ENCODE measurements at regions of chr7 and their contacts with region 1.

Region 1: GRCh38 chr7:19982841-19983835 is 209.7 kb upstream of the TMEM196 start:
- DNase-seq: no peak
- CTCF ChIP-seq: peak; percentile 61

Region 2: GRCh38 chr7:19754521-19755116 is 228.5 kb before region 1 on chr7:
- in situ Hi-C with region 1: loop called (anchors 25 kb)
- DNase-seq: peak; percentile 17
- CTCF ChIP-seq: peak; percentile 57

Region 3: DNA sequence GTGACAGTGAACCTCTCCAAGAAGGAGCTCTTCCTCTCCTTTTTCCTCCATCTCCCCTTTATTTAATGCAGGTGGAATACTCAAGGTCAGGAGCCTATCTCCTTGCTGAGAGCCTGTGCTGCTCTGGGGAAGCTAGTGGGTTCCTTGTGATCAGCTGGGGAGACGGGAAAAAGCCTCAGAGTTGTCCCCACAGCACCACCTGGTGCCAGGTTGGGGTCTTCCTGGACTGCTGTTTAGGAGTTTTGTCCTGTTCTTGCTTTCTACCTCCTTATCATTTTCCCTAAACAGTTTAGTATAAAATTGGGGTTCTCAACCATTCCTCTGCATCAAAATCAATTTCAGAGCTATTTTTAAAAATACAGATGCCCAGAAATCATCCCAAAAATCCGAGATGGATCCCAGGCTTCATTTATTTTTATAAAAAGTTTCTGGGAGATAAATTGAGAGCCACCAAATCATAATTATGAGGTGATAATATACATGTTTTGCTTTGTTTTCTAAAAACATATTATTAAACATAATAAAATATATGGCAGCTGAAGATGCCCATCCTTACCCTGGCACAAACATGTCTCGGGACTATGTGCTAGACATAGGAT is 189.7 kb after region 1 on chr7:
- in situ Hi-C with region 1: loop called (anchors 25 kb)
- DNase-seq: peak; percentile 17
- CTCF ChIP-seq: peak; percentile 63

Region 4: GRCh38 chr7:20249920-20250319 is 266.8 kb after region 1 on chr7:
- in situ Hi-C with region 1: no loop called
- DNase-seq: no peak
- CTCF ChIP-seq: no peak

Region 5: DNA sequence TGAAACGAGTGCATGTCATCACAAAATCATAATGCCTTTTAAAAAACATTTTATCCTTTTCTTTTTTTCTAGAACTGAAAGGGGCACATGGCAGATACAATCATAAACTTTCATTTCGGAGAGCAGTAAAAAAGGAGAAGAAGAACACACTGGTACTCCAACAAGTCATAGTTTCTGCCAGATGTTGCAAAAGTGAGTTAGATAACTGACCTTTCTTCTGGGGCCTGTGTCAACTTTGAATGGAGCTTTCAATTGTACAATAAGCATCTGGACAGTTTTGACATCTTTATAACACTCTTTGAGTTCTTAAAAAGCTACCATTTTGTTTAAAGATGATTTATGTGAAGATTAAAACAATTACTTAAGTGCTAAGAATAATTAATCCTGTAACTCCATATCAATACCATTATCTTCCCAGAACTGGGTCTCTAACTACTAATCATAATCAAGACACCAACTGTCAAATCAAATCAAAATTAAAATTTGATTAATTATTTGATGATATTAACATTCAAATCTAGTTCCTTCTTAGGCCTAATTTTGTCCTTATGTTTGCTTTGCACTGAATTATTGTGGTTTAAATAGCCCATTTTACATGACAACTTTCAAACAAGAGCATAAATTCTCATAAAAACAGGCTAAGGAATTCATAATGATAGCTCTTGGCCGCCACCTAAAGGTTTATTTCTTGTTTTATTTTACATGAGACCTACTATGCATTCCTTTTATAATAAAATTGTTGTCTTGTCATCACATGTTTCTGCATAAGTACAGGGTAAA is 328.0 kb after region 1 on chr7:
- in situ Hi-C with region 1: loop called (anchors 25 kb)
- DNase-seq: no peak
- CTCF ChIP-seq: peak; percentile 48

Region 6: DNA sequence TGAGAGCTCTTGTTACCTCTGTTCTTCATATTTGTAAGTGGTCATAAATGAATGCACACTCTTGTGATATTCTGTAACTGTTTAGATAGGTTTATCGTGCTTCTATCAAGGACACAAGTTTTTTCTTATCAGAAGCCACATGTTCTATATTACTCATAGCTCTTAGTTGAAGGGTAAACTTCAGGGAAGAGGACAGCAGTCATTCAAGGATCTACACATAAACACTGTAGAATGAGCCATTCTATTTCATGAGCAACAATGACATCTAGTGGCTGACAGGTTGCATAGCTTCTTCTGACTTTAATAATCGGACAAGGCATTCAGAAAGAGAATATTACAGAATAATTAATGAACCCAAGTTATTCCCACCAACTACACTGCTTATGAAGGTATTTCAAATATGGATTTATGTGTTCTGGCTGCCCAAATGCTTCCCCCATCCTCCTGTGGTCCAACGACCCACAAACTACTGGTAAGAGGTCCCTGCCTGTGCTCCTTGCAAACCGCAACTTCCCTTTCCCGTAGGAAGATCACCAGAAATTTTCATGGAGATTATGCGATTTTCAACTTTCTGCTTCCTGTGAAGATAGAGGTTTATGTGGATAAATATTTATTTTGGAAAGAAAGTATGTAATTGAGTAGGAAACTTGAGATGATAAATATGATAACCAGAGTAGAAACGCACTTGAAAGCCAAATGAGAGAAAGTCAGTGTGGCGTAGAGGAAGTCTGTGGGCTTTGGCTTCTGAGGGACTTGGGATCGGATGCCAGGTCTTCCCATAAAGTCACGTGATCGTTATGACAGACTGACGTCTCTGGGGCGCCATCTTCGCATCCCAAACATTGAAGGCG is 615.5 kb after region 1 on chr7:
- in situ Hi-C with region 1: loop called (anchors 10 kb)
- DNase-seq: peak; percentile 49
- CTCF ChIP-seq: peak; percentile 81